SK-N-SH (cell line): ENCODE measurements at regions of chr6 and their contacts with region 1.

Region 1: DNA sequence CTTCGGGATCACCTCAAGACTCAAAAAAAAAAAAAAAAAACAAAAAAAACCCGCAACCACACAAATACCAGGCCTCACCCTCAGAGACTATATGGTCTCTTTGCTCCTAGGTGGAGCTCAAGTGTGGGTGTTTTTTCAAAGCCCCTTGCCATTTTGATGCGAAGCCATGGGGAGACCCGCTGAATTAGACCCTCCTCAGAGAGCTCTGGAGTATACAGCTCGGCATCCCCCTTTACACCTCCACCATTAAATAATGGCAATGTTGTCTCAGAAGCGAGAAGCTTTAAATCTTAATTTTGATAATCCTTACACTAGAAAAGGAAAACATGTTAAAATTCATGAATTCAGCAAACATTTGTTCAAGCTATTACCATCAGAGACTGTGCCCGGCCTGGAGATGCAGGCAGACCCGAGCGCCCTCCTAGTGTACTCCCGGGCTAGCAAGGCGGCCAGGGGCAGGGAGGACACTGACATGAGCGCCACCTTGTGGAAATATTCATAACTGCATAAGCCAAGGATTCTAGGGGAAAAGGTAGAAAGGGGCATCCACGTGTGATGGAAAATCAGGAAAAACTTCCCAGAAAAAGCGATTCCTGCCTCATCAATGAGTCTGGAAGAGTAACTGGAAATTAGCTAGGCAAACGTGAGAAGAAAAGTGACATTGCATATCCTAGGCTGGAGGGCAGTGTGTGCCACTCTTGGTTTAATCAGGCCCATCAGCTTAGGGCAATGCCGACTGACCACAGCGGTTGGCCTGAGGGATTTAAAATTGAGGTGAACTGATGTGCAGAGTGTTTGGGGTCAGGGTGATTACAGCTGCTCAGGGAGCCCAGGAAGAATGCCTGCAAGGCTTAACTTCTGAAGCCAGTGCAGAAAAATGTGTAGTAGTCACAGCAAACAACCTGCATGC is 72.5 kb downstream of the B3GAT2 start:
- DNase-seq: peak; percentile 84
- H3K4me3 ChIP-seq: no peak overlapping the region
- H3K27ac ChIP-seq: no peak overlapping the region
- H3K4me1 ChIP-seq: no peaks in the 10 kb centered on the region
- H3K27me3 ChIP-seq: no peaks in the 10 kb centered on the region; the same call in 1 of the 2 replicates
- CTCF ChIP-seq: peak; percentile 92
- EP300 ChIP-seq: no peak
- RAD21 ChIP-seq: peak; percentile 93

Region 2: DNA sequence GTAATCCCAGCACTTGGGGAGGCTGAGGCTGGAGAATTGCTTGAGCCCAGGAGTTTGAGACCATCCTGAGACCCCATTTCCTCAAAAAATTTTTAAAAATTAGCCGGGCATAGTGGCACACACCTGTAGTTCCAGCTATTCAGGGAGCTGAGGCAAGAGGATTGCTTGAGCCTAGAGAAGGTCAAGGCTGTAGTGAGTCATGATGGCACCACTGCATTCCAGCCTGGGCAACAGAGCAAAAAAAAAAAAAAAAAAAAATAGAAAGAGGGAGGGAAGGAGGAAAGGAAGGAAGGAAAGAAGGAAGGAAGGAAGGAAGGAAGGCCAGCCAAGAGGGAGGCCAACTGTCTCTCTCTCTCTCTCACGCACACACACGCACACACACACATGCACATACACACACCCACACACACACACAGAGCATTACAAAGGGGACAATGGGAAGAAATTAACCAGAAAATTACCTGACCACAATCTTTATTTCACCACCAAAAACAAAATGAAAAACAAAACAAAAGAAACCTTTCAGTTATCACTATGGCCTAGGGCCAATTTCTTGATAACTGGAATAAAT is 530.9 kb before region 1 on chr6:
- CTCF ChIA-PET with region 1: no interaction called
- POLR2A ChIA-PET with region 1: no interaction called
- DNase-seq: no peak
- H3K4me3 ChIP-seq: no peak overlapping the region
- H3K27ac ChIP-seq: no peak overlapping the region
- H3K4me1 ChIP-seq: peaks cover 0 to 4% of the 10 kb centered on the region in 2 experiments; a peak in 2 of 4 replicates
- H3K27me3 ChIP-seq: no peaks in the 10 kb centered on the region
- CTCF ChIP-seq: no peak
- EP300 ChIP-seq: no peak
- RAD21 ChIP-seq: no peak

Region 3: GRCh38 chr6:70520575-70520974 is 363.8 kb before region 1 on chr6:
- CTCF ChIA-PET with region 1: interaction called, 12 read pairs
- POLR2A ChIA-PET with region 1: no interaction called
- DNase-seq: peak; percentile 9
- H3K4me3 ChIP-seq: no peak overlapping the region
- H3K27ac ChIP-seq: no peak overlapping the region
- H3K4me1 ChIP-seq: no peaks in the 10 kb centered on the region
- H3K27me3 ChIP-seq: no peaks in the 10 kb centered on the region
- CTCF ChIP-seq: peak; percentile 53
- EP300 ChIP-seq: no peak
- RAD21 ChIP-seq: peak; percentile 71

Region 4: GRCh38 chr6:70725817-70726415 is 158.4 kb before region 1 on chr6:
- CTCF ChIA-PET with region 1: interaction called, 11 read pairs
- POLR2A ChIA-PET with region 1: no interaction called
- DNase-seq: no peak
- H3K4me3 ChIP-seq: no peak overlapping the region
- H3K27ac ChIP-seq: no peak overlapping the region
- H3K4me1 ChIP-seq: peaks cover 0 to 5% of the 10 kb centered on the region in 2 experiments; a peak in 2 of 4 replicates
- H3K27me3 ChIP-seq: no peaks in the 10 kb centered on the region
- CTCF ChIP-seq: no peak
- EP300 ChIP-seq: no peak
- RAD21 ChIP-seq: no peak

Region 5: DNA sequence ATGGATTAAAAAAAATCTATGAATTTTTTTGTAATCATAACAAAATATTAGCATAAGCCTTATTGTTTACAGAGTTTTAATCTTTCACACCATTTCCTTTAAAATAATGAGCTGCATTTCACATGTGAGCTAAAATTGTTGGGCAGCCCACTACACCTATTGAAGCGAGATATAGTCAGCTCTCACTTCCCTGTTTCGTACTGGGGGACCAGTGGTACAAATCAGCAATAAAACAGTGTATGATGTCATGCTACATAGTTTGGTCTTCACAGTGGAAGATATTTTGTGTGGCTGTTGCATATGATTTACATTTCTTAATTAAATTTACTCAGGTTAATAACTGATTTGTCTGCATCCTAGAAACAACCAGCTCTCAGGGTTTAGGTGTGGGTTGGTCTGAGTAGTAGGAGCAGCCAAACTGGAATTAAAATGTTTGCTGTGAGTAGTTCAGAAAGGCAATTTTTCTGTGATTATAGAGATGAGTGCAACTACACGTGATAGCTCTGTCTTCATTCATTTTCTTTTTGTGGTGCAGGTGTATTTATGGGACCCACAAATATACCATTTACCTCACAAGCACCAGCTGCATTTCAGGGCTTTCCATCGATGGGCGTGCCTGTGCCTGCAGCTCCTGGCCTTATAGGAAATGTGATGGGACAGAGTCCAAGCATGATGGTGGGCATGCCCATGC is 26.8 kb before region 1 on chr6:
- CTCF ChIA-PET with region 1: interaction called, 15 read pairs
- POLR2A ChIA-PET with region 1: no interaction called
- DNase-seq: no peak
- H3K4me3 ChIP-seq: no peak overlapping the region
- H3K27ac ChIP-seq: no peak overlapping the region
- H3K4me1 ChIP-seq: no peaks in the 10 kb centered on the region; a peak in 1 of 4 replicates
- H3K27me3 ChIP-seq: no peaks in the 10 kb centered on the region
- CTCF ChIP-seq: no peak
- EP300 ChIP-seq: no peak
- RAD21 ChIP-seq: no peak

Region 6: GRCh38 chr6:70955441-70956190 is 71.3 kb after region 1 on chr6:
- CTCF ChIA-PET with region 1: interaction called, 23 read pairs
- POLR2A ChIA-PET with region 1: no interaction called
- DNase-seq: peak; percentile 91
- H3K4me3 ChIP-seq: peak overlapping the region; percentile 52 to 67
- H3K27ac ChIP-seq: no peak overlapping the region
- H3K4me1 ChIP-seq: peaks cover 0 to 14% of the 10 kb centered on the region in 2 experiments; a peak in 1 of 4 replicates
- H3K27me3 ChIP-seq: peaks cover 36% of the 10 kb centered on the region
- CTCF ChIP-seq: peak; percentile 75
- EP300 ChIP-seq: no peak
- RAD21 ChIP-seq: peak; percentile 66